ENCODE measurements at regions of chr9 and their contacts with region 1.

Region 1: GRCh38 chr9:112097712-112098688 is 77.1 kb downstream of the SUSD1 start:
- DNase-seq: peak; percentile 77
- ATAC-seq: peak; percentile 84
- H3K4me3 Mint-ChIP-seq: no peak overlapping the region
- H3K27ac Mint-ChIP-seq: no peak overlapping the region
- H3K4me1 Mint-ChIP-seq: peaks cover 39% of the 10 kb centered on the region
- H3K27me3 Mint-ChIP-seq: no peaks in the 10 kb centered on the region

Region 2: DNA sequence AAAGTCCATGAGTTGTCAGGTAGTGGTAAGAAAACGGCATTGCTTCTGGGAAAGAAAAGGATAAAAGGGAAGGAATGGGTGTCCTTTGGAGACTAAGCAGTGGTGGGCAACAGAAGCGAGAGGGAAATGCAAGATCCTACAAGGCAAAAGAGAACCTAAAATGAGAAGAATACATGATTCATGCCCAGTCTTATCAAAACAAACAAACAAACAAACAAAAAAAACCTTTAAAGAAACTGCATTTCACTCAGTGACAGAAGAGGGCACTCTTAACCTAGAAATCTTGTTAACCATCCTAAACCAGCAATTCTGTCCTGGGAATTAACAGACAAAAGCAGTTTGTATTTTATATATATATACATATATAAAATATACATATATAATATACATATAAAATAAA is 11.4 kb before region 1 on chr9:
- CTCF ChIA-PET with region 1: interaction called, 10 read pairs
- DNase-seq: no peak
- ATAC-seq: no peak
- H3K4me3 Mint-ChIP-seq: no peak overlapping the region
- H3K27ac Mint-ChIP-seq: no peak overlapping the region
- H3K4me1 Mint-ChIP-seq: peaks cover 6% of the 10 kb centered on the region
- H3K27me3 Mint-ChIP-seq: no peaks in the 10 kb centered on the region

Region 3: DNA sequence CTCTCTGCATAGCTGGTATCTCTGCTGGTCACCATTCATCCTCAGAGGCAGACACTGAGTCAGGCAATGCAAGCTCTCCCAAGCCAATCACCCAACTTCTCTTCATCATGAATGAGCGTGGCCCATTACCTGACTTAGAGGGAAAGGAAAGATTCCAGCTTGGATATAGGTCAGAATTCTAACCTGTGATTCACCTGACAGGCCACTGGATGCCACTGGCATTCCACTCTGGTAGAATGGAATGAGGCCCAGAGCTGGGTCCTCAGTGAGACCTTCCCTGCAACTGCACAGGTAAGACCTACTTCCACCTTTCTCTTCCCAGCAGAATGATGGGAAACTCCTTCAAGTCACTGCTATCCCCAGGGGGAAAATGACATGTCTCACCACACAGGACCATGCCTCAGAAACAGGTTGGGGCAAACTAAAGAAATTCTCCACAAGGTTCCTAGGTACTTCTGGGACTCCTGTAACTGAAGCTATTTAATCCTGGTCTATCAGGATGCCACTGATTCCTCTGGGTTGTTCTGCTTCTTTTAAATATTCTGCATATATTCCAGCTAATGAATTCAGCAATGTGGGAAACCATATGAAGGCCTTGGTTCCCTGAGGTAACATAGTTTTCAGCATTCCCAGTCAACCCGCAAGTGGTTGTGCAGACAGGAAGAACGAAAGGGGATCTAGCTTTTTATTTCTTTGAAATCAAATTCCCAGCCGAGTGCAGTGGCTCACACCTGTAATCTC is 15.1 kb after region 1 on chr9:
- CTCF ChIA-PET with region 1: interaction called, 15 read pairs
- DNase-seq: no peak
- ATAC-seq: peak; percentile 23
- H3K4me3 Mint-ChIP-seq: no peak overlapping the region
- H3K27ac Mint-ChIP-seq: no peak overlapping the region
- H3K4me1 Mint-ChIP-seq: peaks cover 3% of the 10 kb centered on the region
- H3K27me3 Mint-ChIP-seq: no peaks in the 10 kb centered on the region

Region 4: GRCh38 chr9:112174218-112174964 is 76.4 kb after region 1 on chr9:
- CTCF ChIA-PET with region 1: interaction called, 10 read pairs
- DNase-seq: peak; percentile 91
- ATAC-seq: peak; percentile 86
- H3K4me3 Mint-ChIP-seq: peak overlapping the region; percentile 86
- H3K27ac Mint-ChIP-seq: peak overlapping the region; percentile 94
- H3K4me1 Mint-ChIP-seq: peaks cover 68% of the 10 kb centered on the region
- H3K27me3 Mint-ChIP-seq: no peaks in the 10 kb centered on the region

Region 5: GRCh38 chr9:112333639-112334431 is 235.8 kb after region 1 on chr9:
- CTCF ChIA-PET with region 1: interaction called, 21 read pairs
- DNase-seq: peak; percentile 95
- ATAC-seq: peak; percentile 84
- H3K4me3 Mint-ChIP-seq: peak overlapping the region; percentile 94
- H3K27ac Mint-ChIP-seq: peak overlapping the region; percentile 98
- H3K4me1 Mint-ChIP-seq: peaks cover 27% of the 10 kb centered on the region
- H3K27me3 Mint-ChIP-seq: peaks cover 2% of the 10 kb centered on the region

Region 6: GRCh38 chr9:112361601-112362000 is 263.6 kb after region 1 on chr9:
- CTCF ChIA-PET with region 1: interaction called, 61 read pairs
- DNase-seq: no peak
- ATAC-seq: peak; percentile 49
- H3K4me3 Mint-ChIP-seq: no peak overlapping the region
- H3K27ac Mint-ChIP-seq: no peak overlapping the region
- H3K4me1 Mint-ChIP-seq: peaks cover 7% of the 10 kb centered on the region
- H3K27me3 Mint-ChIP-seq: peaks cover 6% of the 10 kb centered on the region

Measured in activated CD8-positive, alpha-beta memory T cell treated with anti-CD3 and anti-CD28 coated beads, Interleukin-2, amount 10 ng/mL, durations not matched to agents 7 days and 5 days (primary cell).